Mammary epithelial cell (primary cell): ENCODE measurements at regions of chr3 and their contacts with region 1.

Region 1: DNA sequence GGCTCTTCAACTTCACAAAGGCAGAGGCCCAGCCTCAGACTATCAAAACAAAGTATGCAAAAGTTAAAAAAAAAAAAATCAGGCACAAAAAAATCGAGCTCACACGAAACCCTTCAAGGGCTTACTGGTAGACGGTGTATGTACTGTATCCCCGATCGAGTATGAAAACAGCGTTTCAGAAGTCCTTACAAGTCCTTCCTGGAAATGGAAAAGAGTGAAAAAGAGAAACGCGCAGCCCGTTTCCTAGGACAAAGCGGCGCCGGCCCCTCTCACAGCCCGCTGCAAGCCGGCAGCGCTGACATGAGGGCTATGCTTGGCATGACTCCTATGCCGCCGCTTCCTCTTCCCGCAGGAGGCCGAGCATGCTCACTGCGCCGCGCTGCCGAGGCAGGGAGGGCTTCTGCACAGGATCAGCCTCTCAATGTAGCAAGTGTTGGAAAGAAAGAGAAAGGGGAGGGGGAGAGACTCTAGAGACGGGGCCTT is at the start of gene VGLL4:
- DNase-seq: peak; percentile 77
- H3K4me3 ChIP-seq: peak within 1 kb of the TSS; percentile 57 to 65 (median 61)
- H3K27ac ChIP-seq: peak within 1 kb of the TSS; percentile 93
- H3K4me1 ChIP-seq: peaks cover 31% of the 10 kb centered on the region
- H3K27me3 ChIP-seq: no peaks in the 10 kb centered on the region
- CTCF ChIP-seq: peak; percentile 6 to 31
- total RNA-seq, gene VGLL4: 30.8 to 77.3 TPM

Region 2: GRCh38 chr3:11582191-11582968 is 61.3 kb before region 1 on chr3:
- CTCF ChIA-PET with region 1: no interaction called
- dilution Hi-C with region 1: no loop called
- in situ Hi-C with region 1: no loop called
- intact Hi-C with region 1: no loop called
- DNase-seq: peak; percentile 63
- H3K4me3 ChIP-seq: peak overlapping the region; percentile 20 to 37 (median 20)
- H3K27ac ChIP-seq: peak overlapping the region; percentile 47
- H3K4me1 ChIP-seq: peaks cover 29% of the 10 kb centered on the region
- H3K27me3 ChIP-seq: no peaks in the 10 kb centered on the region
- CTCF ChIP-seq: no peak

Region 3: GRCh38 chr3:11601446-11602238 is 42.0 kb before region 1 on chr3:
- CTCF ChIA-PET with region 1: no interaction called
- dilution Hi-C with region 1: loop called (anchors 5 kb)
- in situ Hi-C with region 1: no loop called
- intact Hi-C with region 1: loop called (anchors 1 kb)
- DNase-seq: no peak
- H3K4me3 ChIP-seq: no peak overlapping the region
- H3K27ac ChIP-seq: no peak overlapping the region
- H3K4me1 ChIP-seq: peaks cover 31% of the 10 kb centered on the region
- H3K27me3 ChIP-seq: no peaks in the 10 kb centered on the region
- CTCF ChIP-seq: no peak

Region 4: DNA sequence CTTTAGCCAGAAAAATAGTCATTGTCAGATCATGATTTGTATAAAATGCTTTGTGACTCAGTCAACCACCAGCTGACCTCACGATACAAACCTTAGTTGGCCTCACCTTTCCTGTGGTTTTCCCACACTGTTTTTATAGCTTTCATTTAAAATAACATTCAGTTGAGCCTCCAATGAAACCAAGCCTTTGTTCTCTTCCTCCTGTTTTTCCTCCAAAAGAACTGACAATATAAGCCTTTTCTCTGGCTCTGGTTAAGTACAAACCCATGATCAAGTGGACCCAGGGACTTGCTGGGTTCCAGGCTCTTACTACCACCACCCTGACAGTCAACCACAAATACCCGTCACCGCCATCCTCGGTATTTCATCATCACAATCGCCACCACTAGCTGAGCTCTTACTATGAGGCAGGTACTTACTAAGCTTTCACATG is 121.3 kb after region 1 on chr3:
- CTCF ChIA-PET with region 1: no interaction called
- dilution Hi-C with region 1: no loop called
- in situ Hi-C with region 1: no loop called
- intact Hi-C with region 1: loop called (anchors 5 kb)
- DNase-seq: peak; percentile 97
- H3K4me3 ChIP-seq: peak overlapping the region in 2 of 3 experiments; percentile 4 to 10
- H3K27ac ChIP-seq: peak overlapping the region; percentile 85
- H3K4me1 ChIP-seq: peaks cover 16% of the 10 kb centered on the region
- H3K27me3 ChIP-seq: no peaks in the 10 kb centered on the region
- CTCF ChIP-seq: no peak